SK-N-SH (cell line): ENCODE measurements at regions of chr3 and their contacts with region 1.

Region 1: GRCh38 chr3:129490242-129491045 is 38.0 kb upstream of the RHO start:
- DNase-seq: peak; percentile 84
- H3K4me3 ChIP-seq: no peak overlapping the region
- H3K27ac ChIP-seq: peak overlapping the region in 1 of 2 experiments; percentile 41; a peak in 1 of 4 replicates
- H3K4me1 ChIP-seq: peaks cover 0 to 9% of the 10 kb centered on the region in 2 experiments; a peak in 1 of 4 replicates
- H3K27me3 ChIP-seq: no peaks in the 10 kb centered on the region
- CTCF ChIP-seq: peak; percentile 92
- EP300 ChIP-seq: no peak
- RAD21 ChIP-seq: peak; percentile 98

Region 2: DNA sequence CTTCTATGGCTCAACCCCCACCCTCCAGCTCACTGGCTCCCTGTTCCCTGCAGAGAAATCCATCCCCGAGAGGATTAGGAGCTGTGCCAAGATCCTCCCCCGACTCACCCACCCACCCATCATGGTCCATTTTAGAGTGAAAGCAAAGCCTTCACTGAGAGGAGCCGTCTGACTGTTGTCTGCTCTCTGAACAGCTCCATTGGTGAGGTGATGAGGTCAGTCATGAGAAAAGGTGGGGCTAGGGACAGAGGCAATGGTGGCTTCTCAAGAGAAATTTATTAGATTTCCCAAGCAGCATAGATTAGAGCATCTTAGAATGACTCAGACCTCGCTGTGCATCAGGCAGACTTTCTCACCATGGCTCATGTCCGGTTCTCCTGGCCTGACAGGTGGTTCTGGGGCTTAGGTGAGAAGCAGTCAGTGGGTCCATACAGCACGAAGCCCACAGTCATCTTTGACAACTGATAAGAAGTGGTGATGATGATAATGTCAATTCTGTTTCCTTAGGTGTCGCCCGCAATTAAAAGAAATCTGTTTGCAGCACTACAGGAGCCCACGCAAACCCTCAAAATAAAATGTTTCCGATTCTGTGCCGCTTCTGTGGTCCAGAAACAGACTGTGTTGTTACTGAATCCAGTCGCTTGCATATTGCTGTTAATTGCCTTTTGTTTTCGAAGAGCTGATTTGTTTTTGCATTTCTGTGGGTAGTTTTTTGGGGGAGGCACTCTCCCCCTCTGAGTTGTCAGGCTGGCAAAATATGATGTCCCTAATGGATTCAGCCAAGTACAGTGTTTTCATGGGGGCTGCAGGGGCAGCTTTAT is 13.2 kb after region 1 on chr3:
- CTCF ChIA-PET with region 1: interaction called, 37 read pairs
- POLR2A ChIA-PET with region 1: no interaction called
- DNase-seq: no peak
- H3K4me3 ChIP-seq: no peak overlapping the region
- H3K27ac ChIP-seq: no peak overlapping the region
- H3K4me1 ChIP-seq: peaks cover 3 to 28% of the 10 kb centered on the region in 2 experiments; a peak in 2 of 4 replicates
- H3K27me3 ChIP-seq: no peaks in the 10 kb centered on the region
- CTCF ChIP-seq: no peak
- EP300 ChIP-seq: no peak
- RAD21 ChIP-seq: no peak

Region 3: GRCh38 chr3:129606636-129607390 is 116.4 kb after region 1 on chr3 and contains the start of gene PLXND1:
- CTCF ChIA-PET with region 1: interaction called, 12 read pairs
- POLR2A ChIA-PET with region 1: no interaction called
- DNase-seq: peak; percentile 94
- H3K4me3 ChIP-seq: peak within 1 kb of the TSS; percentile 45 to 66
- H3K27ac ChIP-seq: no peak within 1 kb of the TSS
- H3K4me1 ChIP-seq: peaks cover 7 to 10% of the 10 kb centered on the region in 2 experiments; a peak in 2 of 4 replicates
- H3K27me3 ChIP-seq: no peaks in the 10 kb centered on the region
- CTCF ChIP-seq: no peak
- EP300 ChIP-seq: no peak
- RAD21 ChIP-seq: no peak
- polyA plus RNA-seq, gene PLXND1: 43.0 and 53.5 TPM in 2 replicates

Region 4: DNA sequence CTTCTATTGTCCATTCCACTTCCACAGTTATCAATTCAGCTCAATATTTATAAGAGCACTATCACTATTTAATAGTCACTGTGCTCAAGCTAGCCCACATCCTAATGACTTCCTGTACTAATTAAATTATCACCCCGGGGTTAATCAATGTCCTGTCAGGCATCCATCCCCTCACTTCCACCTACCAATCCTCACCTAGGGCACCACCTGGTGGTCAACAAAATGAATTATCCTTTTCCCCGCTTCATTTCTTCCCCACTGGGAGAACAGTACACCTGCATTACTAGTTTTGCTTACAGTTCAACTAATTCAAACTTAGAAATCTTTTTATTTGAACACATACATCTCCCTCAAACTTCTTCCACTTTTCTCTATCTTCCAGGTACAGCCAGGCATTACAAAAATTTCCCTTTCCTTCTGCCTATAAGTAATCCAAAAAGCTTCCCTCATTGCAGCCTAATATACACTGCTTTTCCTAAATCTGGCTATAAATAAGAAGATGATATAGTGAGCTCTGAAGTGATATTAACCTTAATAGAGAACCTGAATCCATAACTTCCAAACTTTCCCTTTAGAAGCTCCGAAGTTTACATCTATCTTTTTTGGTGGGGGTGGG is 334.6 kb after region 1 on chr3:
- CTCF ChIA-PET with region 1: interaction called, 15 read pairs
- POLR2A ChIA-PET with region 1: no interaction called
- DNase-seq: peak; percentile 51
- H3K4me3 ChIP-seq: no peak overlapping the region
- H3K27ac ChIP-seq: no peak overlapping the region
- H3K4me1 ChIP-seq: peaks cover 0 to 6% of the 10 kb centered on the region in 2 experiments; a peak in 3 of 4 replicates
- H3K27me3 ChIP-seq: no peaks in the 10 kb centered on the region
- CTCF ChIP-seq: peak; percentile 76
- EP300 ChIP-seq: no peak
- RAD21 ChIP-seq: peak; percentile 84

Region 5: GRCh38 chr3:129934234-129935123 is 444.0 kb after region 1 on chr3:
- CTCF ChIA-PET with region 1: interaction called, 17 read pairs
- POLR2A ChIA-PET with region 1: no interaction called
- DNase-seq: peak; percentile 77
- H3K4me3 ChIP-seq: peak overlapping the region in 1 of 2 experiments; percentile 37; a peak in 1 of 4 replicates
- H3K27ac ChIP-seq: no peak overlapping the region
- H3K4me1 ChIP-seq: no peaks in the 10 kb centered on the region; a peak in 1 of 4 replicates
- H3K27me3 ChIP-seq: no peaks in the 10 kb centered on the region
- CTCF ChIP-seq: peak; percentile 95
- EP300 ChIP-seq: no peak
- RAD21 ChIP-seq: peak; percentile 88